ENCODE measurements at regions of chr1 and their contacts with region 1.

Region 1: GRCh38 chr1:145891587-145892485 is 6.2 kb upstream of the ANKRD35 start:
- DNase-seq: peak; percentile 87
- H3K4me3 ChIP-seq: peak overlapping the region; percentile 15 to 42
- H3K27ac ChIP-seq: peak overlapping the region; percentile 94 to 98
- H3K4me1 ChIP-seq: peaks cover 21 to 28% of the 10 kb centered on the region in 2 experiments
- H3K27me3 ChIP-seq: no peaks in the 10 kb centered on the region
- CTCF ChIP-seq: peak; percentile 99
- EP300 ChIP-seq: peak; percentile 29 to 76; a peak in 3 of 4 replicates
- RAD21 ChIP-seq: peak; percentile 95

Region 2: GRCh38 chr1:145858894-145859490 is 32.8 kb before region 1 on chr1 and contains the start of gene PIAS3:
- CTCF ChIA-PET with region 1: interaction called, 20 read pairs
- POLR2A ChIA-PET with region 1: interaction called, 4 read pairs
- DNase-seq: peak; percentile 98
- H3K4me3 ChIP-seq: peak within 1 kb of the TSS; percentile 66 to 83
- H3K27ac ChIP-seq: peak within 1 kb of the TSS; percentile 83 to 95
- H3K4me1 ChIP-seq: peaks cover 8 to 9% of the 10 kb centered on the region in 2 experiments; a peak in 3 of 4 replicates
- H3K27me3 ChIP-seq: no peaks in the 10 kb centered on the region
- CTCF ChIP-seq: no peak
- EP300 ChIP-seq: peak in 1 of 2 experiments; percentile 3; a peak in 1 of 4 replicates
- RAD21 ChIP-seq: no peak
- polyA plus RNA-seq, gene PIAS3: 35.5 and 39.1 TPM in 2 replicates

Region 3: GRCh38 chr1:145879775-145880174 is 12.1 kb before region 1 on chr1:
- CTCF ChIA-PET with region 1: interaction called, 54 read pairs
- POLR2A ChIA-PET with region 1: no interaction called
- DNase-seq: no peak
- H3K4me3 ChIP-seq: no peak overlapping the region
- H3K27ac ChIP-seq: no peak overlapping the region
- H3K4me1 ChIP-seq: peaks cover 0 to 7% of the 10 kb centered on the region in 2 experiments; a peak in 3 of 4 replicates
- H3K27me3 ChIP-seq: no peaks in the 10 kb centered on the region
- CTCF ChIP-seq: no peak
- EP300 ChIP-seq: no peak
- RAD21 ChIP-seq: no peak

Region 4: GRCh38 chr1:145957443-145958319 is 65.8 kb after region 1 on chr1 and contains the start of gene LIX1L:
- CTCF ChIA-PET with region 1: interaction called, 17 read pairs
- POLR2A ChIA-PET with region 1: interaction called, 3 read pairs
- DNase-seq: peak; percentile 95
- H3K4me3 ChIP-seq: peak within 1 kb of the TSS; percentile 62 to 74
- H3K27ac ChIP-seq: peak within 1 kb of the TSS; percentile 82 to 99
- H3K4me1 ChIP-seq: peaks cover 26 to 52% of the 10 kb centered on the region in 2 experiments
- H3K27me3 ChIP-seq: no peaks in the 10 kb centered on the region
- CTCF ChIP-seq: no peak
- EP300 ChIP-seq: no peak; a peak in 1 of 4 replicates
- RAD21 ChIP-seq: no peak
- polyA plus RNA-seq, gene LIX1L: 39.1 and 39.4 TPM in 2 replicates

Region 5: DNA sequence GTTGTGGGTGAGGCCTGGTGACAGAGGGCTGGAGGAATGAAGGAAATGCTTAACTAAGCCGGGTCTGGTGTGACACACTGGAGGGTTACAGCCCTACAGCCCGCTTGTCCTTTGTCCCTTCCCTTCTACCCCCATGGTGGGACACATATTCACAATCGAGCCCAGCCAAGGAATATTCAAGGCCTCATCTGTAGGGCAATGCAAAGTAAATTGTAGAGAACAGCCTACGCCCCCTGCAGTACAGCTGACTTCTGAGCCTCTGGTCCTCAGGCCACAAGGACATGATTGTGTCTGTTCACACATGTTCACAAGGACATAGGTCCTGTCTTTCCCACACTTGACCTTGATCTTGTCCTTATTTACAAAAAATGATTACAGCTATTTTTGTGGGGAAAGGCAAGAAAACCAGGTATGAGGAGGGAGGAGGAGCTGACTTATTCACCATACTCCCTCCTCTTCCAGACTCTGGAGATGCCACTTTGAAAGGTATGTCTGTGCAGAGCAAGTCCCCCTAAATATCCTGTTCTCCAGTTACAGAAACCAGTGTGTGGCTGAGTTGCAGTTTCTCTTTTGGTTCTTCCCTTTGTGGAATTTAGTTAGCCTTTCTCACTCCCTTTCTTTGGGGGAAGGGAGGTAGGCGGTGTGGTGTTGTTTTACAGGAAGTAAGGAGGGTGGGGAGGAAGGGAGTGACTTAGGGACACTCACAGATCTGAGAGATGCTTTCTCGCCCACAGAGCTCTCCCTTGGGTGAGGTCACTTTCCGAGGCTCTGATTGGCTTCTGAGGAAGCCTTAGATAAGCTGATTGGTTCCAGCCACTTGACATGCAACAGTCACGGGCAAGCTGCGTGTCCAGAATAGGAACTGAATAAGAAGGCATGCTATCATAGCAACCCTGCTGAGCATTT is 87.3 kb after region 1 on chr1:
- CTCF ChIA-PET with region 1: interaction called, 37 read pairs
- POLR2A ChIA-PET with region 1: no interaction called
- DNase-seq: peak; percentile 82
- H3K4me3 ChIP-seq: peak overlapping the region; percentile 18 to 45; a peak in 3 of 4 replicates
- H3K27ac ChIP-seq: peak overlapping the region; percentile 92 to 99
- H3K4me1 ChIP-seq: peaks cover 27 to 30% of the 10 kb centered on the region in 2 experiments
- H3K27me3 ChIP-seq: no peaks in the 10 kb centered on the region
- CTCF ChIP-seq: peak; percentile 48
- EP300 ChIP-seq: peak; percentile 58 to 74; a peak in 2 of 4 replicates
- RAD21 ChIP-seq: no peak

Region 6: DNA sequence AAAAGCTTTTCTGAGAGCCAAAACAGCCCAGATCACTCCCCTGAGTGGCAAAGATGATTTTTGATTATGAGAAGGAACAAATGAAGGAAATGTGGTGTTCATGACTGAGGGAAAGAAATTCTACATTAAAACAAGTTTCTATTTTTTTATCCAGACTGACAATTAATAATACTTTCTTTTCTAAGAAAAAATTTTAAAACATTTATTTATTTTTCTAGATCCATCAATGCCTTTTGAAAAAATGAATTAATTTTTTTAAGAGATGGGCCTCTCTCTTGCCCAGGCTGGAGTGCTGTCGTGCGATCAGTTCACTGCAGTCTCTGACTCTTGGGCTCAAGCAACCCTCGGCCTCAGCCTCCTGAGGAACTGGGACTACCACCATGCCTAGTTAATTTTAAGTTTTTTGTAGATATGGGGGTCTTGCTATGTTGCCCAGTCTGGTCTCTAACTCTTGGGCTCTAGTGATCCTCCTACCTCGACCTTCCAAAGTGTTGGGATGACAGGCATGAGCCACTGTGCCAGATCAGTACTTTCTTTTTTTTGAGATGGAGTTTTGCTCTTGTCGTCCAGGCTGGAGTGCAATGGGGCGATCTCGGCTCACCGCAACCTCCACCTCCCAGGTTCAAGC is 115.8 kb after region 1 on chr1:
- CTCF ChIA-PET with region 1: interaction called, 29 read pairs
- POLR2A ChIA-PET with region 1: no interaction called
- DNase-seq: no peak
- H3K4me3 ChIP-seq: no peak overlapping the region
- H3K27ac ChIP-seq: peak overlapping the region in 1 of 2 experiments; percentile 42; a peak in 1 of 4 replicates
- H3K4me1 ChIP-seq: peaks cover 2 to 3% of the 10 kb centered on the region in 2 experiments; a peak in 2 of 4 replicates
- H3K27me3 ChIP-seq: no peaks in the 10 kb centered on the region
- CTCF ChIP-seq: no peak
- EP300 ChIP-seq: no peak
- RAD21 ChIP-seq: no peak

Region 7: DNA sequence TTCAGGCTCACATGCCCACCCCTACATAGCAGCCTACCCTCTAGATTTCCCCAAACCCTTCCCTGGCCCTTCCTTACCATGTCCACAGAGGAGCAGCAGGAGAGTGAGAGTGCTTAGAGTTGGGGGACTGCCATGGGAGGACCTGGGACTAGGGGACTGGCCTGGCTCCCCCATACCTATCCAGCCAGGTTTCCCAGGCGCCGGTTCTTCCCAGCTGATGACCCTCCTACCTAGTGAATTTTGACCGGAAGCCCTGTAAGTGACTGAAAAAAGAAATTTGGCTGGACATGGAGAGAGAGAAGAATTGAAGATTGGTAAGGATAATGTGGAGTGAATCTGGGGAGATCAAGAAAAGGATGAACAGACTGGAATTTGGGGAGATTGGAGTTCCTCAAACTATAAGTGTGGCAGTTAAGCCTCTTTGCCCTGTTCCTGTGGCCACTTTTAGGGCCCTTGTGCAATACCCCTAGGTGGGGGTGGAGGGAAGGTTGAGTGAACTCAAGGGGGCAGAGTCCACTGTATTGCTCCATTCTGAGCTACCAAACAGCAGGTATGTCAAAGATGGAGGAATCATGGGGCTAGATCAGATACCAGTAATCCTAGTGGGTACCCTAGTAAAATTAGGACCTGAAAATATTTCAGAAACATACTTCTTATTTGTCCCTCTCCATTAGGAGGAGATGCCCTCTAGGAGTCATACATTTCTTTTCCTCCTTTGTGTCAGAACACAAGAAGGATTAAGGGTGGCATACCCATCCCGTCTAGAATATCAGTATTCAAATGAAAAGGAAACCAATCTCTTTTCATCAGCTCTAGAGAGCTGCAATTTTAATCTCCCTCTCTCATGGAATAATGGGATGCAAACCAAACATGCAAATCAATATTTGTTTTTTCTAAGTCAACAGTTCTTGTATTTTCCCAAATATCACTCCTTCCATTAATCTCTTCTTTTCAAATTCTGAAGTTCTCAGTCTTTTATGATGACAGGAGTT is 128.5 kb after region 1 on chr1:
- CTCF ChIA-PET with region 1: interaction called, 41 read pairs
- POLR2A ChIA-PET with region 1: no interaction called
- DNase-seq: no peak
- H3K4me3 ChIP-seq: no peak overlapping the region
- H3K27ac ChIP-seq: no peak overlapping the region
- H3K4me1 ChIP-seq: peaks cover 2 to 9% of the 10 kb centered on the region in 2 experiments; a peak in 3 of 4 replicates
- H3K27me3 ChIP-seq: no peaks in the 10 kb centered on the region
- CTCF ChIP-seq: no peak
- EP300 ChIP-seq: no peak
- RAD21 ChIP-seq: no peak